AG04449 (cell line): ENCODE measurements at regions of chr3 and their contacts with region 1.

Region 1: DNA sequence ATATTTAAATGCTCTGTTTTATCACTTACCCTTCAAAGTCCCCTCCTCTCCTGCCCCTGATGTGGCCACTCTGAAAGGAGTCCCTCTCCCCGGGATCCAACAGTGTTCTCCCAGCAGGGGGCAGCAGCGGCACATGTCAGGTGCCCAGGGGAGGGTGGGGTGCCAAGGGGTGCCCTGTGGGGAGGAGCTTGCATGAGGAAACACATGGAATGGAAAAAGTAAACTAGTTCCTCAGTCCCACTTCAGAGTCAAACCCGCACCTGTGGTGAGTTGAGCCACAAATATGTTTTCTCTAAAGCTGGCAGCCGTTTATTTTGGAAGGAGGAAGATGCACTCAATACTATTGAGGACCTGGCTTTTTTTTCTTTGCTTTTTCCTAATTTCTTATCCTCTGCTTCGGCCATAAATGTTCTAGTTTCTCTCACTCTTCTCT is 30.1 kb upstream of the NRROS start:
- DNase-seq: no peak
- H3K4me3 ChIP-seq: no peak overlapping the region
- CTCF ChIP-seq: peak; percentile 92

Region 2: DNA sequence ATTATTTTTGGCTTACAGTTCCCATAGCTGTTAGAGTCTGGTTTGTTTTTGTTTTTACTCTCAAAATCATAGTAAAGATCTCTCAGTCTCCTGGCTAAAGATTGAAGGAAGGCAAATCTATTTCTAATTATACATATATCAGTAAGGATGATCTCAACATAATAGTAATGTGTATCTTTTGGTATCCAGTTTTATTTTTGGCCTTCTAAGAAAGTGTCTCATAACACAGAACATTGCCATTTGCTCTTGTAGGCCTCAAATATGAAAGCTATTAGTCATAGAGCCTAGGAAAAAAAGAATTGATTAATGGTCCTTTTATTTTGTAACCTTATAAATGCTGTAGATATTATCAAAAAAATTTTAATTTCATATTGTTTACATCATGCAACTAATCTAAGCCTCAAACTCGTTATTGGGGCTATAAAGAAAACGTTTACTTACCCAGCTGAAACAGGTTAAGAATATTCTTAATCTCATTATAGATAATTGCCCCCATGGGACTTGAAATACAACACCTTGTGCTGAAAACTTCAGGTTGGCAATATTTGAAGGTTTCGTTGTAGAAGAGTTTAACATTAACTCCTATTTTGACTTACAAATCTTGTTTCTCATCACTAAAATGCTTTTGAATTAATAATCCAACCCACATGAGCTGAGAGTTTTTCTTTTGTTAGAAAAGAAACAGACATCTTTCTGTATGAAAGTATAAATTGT is 24.2 kb before region 1 on chr3:
- CTCF ChIA-PET with region 1: interaction called, 16 read pairs
- POLR2A ChIA-PET with region 1: no interaction called
- DNase-seq: no peak
- H3K4me3 ChIP-seq: no peak overlapping the region
- CTCF ChIP-seq: no peak

Region 3: GRCh38 chr3:196590279-196590678 is 19.1 kb before region 1 on chr3:
- CTCF ChIA-PET with region 1: interaction called, 16 read pairs
- POLR2A ChIA-PET with region 1: no interaction called
- DNase-seq: no peak
- H3K4me3 ChIP-seq: no peak overlapping the region
- CTCF ChIP-seq: no peak

Region 4: GRCh38 chr3:196596355-196596754 is 13.0 kb before region 1 on chr3:
- CTCF ChIA-PET with region 1: interaction called, 13 read pairs
- POLR2A ChIA-PET with region 1: no interaction called
- DNase-seq: no peak
- H3K4me3 ChIP-seq: no peak overlapping the region
- CTCF ChIP-seq: no peak

Region 5: GRCh38 chr3:196632046-196632751 is 22.8 kb after region 1 on chr3:
- CTCF ChIA-PET with region 1: interaction called, 12 read pairs
- POLR2A ChIA-PET with region 1: no interaction called
- DNase-seq: no peak
- H3K4me3 ChIP-seq: peak overlapping the region; percentile 65
- CTCF ChIP-seq: peak; percentile 49

Region 6: DNA sequence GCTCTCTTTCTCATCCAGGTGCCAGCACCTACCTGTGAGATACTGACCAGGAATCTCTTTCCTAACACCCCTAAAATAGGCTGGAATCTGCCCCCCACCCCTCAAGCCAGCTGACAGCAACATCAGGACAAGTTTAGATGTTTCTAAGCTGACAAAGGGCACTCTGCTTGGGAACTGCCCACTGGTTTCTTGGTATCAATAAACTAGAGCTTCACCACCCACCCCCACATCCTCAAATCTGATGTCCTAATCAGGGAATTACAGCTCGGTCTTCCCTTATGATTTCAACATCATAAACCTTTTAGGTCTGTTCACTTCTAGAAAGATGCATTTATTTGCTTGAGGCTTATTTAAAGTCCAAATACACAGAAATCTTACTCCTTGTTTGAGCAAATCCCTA is 68.0 kb after region 1 on chr3:
- CTCF ChIA-PET with region 1: interaction called, 32 read pairs
- POLR2A ChIA-PET with region 1: no interaction called
- DNase-seq: no peak
- H3K4me3 ChIP-seq: no peak overlapping the region
- CTCF ChIP-seq: no peak

Region 7: DNA sequence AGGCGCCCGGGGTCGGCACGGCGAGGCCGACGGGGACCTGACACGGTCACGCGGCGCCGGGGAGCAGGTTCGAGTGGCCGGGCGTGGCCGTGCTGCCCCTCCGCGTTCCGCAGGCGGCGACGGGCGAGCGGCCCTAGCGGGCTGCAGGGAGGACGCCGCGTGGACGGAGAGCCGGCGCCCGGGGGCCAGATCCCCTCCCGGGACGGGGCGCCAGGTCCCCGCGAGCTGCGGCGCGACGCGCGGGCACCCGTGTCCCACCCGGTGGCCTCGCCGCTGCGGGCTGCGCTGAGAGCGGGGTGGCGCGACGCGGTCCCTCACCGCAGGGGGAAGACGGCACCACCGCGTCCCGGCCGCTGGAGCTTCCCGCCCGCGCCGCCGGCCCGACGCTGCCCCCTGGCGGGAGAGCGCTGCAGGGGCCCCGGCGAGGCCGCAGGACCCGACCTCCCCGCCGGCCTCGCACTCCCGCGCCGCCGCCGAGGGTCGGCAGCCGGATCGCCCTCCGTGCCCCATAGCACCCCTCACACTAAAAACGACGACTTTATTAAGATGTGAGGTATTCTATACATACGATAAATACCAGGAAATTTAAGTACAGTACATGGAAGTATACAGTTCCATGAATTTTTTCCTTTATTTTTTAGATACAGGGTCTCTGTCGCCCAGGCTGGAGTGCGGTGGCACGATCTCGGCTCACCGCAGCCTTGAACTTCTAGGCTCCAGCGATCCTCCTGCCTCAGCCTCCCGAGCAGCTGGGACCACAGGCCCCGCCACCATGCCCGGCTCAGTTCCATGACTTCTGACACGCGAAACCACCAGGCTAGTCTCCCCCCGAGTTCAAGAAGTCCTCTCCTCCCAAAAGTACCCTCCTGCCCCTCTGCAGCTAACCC is 360.5 kb after region 1 on chr3:
- CTCF ChIA-PET with region 1: interaction called, 11 read pairs
- POLR2A ChIA-PET with region 1: no interaction called
- DNase-seq: no peak
- H3K4me3 ChIP-seq: peak overlapping the region; percentile 60
- CTCF ChIP-seq: peak; percentile 73